GM10248 (cell line): ENCODE measurements at regions of chr12 and their contacts with region 1.

Region 1: GRCh38 chr12:52032804-52033502 is 18.3 kb upstream of the NR4A1 start:
- DNase-seq: peak; percentile 95
- CTCF ChIP-seq: no peak

Region 2: GRCh38 chr12:52004042-52004648 is 28.8 kb before region 1 on chr12:
- CTCF ChIA-PET with region 1: interaction called, 870 read pairs
- POLR2A ChIA-PET with region 1: no interaction called
- DNase-seq: no peak
- CTCF ChIP-seq: peak; percentile 54

Region 3: GRCh38 chr12:52050761-52051541 is 18.0 kb after region 1 on chr12 and contains the start of gene NR4A1:
- CTCF ChIA-PET with region 1: interaction called, 1,220 read pairs
- POLR2A ChIA-PET with region 1: interaction called, 22 read pairs
- DNase-seq: peak; percentile 98
- CTCF ChIP-seq: peak; percentile 34

Region 4: GRCh38 chr12:52121824-52122539 is 89.0 kb after region 1 on chr12:
- CTCF ChIA-PET with region 1: interaction called, 186 read pairs
- POLR2A ChIA-PET with region 1: no interaction called
- DNase-seq: peak; percentile 81
- CTCF ChIP-seq: peak; percentile 81